ENCODE measurements at regions of chr19 and their contacts with region 1.

Region 1: DNA sequence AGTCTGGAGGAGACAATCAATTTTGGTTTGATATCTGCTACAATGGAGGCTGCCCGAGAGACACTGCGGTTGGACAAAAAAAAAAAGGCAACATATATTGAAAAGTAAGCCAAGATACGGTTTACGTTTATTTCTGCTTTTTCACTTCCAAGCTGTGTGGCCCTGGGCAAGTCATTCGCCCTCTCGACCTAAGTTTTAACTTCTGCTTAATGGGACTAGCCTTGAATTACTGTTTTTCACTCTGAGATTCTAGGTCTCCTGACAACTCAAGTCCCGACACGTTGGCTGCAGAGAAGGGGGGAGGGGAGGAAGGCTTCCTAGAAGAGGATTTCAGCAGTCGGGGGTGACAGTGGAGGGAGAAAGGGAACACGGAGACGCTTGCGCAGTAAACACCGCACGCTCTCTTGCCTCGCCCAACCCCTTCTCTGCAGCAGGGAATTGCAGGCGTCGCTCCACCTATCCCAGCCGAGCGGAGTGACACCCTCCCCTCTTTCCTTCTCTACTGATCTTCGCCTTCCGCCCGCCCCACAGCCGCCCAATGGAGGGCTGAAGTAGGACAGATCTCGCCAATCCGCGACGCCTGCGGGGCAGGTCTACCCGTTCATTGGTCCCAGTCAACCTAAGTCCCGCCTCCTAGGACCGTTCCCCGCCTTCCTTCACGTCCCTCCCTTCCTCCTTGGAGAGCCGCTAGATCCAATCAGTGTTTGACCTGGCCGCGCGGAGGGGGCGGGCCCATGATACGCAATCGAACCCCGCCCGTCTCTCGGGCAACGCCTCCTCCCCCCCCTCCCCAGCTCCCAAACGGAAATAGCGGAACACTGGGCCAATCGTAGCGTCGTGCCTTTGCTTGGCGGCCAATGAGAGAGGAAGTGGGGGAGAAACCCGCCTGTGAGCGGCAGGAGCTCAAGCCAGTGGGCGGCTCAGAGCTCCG is 529 bp upstream of the AP2A1 start:
- DNase-seq: peak; percentile 100
- H3K4me3 Mint-ChIP-seq: peak overlapping the region; percentile 94
- H3K27ac Mint-ChIP-seq: peak overlapping the region; percentile 92
- H3K4me1 Mint-ChIP-seq: peaks cover 30% of the 10 kb centered on the region
- H3K27me3 Mint-ChIP-seq: no peaks in the 10 kb centered on the region

Region 2: DNA sequence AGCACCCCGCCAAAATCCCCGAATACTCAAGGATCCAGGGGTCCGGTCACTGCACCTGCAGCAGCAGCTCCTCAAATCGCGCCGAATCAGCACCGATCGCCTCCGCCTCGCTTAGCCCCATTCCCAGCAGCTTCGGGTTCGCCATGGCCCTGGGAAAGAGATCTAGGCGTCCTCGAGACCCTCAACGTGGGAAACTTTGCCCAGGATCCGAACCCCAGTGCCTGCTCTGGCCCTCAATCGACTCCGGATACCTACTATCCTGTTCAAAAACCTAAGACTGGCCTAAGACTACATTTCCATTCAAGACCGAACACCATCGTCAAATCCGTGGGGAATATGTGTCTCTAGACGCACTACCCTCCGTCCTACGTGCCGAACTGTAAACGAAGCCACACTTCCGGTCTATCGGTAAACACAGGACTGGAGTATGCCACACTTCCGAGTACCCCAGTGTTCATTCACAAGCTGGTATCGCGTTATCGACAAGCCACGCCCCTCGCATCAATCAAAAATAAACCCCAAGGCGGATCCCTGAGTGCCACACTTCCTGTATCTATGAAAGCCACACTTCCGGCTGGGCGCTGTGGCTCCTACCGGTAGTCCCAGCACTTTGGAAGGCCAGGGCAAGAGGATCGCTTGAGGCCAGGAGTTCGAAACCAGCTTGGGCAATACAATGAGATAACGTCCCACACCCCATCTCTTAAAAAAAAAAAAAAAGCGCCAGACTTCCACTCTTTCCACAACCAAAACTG is 314.7 kb before region 1 on chr19 and contains the start of gene PIH1D1:
- CTCF ChIA-PET with region 1: no interaction called
- intact Hi-C with region 1: loop called (anchors 5 kb)
- DNase-seq: peak; percentile 99
- H3K4me3 Mint-ChIP-seq: peak within 1 kb of the TSS; percentile 100
- H3K27ac Mint-ChIP-seq: peak within 1 kb of the TSS; percentile 100
- H3K4me1 Mint-ChIP-seq: peaks cover 40% of the 10 kb centered on the region
- H3K27me3 Mint-ChIP-seq: no peaks in the 10 kb centered on the region
- total RNA-seq, gene PIH1D1: 80.7 to 84.4 TPM

Region 3: DNA sequence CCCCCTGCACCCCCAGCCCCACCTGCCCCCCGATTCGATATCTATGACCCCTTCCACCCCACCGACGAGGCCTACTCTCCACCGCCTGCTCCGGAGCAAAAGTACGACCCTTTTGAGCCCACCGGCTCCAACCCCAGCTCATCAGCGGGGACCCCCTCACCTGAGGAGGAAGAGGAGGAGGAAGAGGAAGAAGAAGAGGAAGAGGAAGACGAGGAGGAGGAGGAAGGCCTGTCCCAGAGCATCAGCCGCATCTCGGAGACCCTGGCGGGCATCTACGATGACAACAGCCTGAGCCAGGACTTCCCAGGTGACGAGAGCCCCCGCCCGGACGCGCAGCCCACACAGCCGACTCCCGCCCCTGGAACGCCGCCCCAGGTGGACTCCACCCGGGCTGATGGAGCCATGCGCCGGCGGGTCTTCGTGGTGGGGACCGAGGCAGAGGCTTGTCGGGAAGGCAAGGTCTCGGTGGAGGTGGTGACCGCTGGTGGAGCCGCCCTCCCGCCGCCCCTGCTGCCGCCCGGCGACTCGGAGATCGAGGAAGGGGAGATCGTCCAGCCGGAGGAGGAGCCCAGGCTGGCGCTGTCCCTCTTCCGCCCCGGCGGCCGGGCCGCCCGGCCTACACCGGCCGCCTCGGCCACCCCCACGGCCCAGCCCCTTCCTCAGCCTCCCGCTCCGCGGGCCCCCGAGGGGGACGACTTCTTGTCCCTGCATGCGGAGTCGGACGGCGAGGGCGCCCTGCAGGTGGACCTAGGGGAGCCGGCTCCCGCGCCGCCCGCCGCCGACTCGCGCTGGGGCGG is 115.0 kb before region 1 on chr19:
- CTCF ChIA-PET with region 1: no interaction called
- intact Hi-C with region 1: no loop called
- DNase-seq: no peak
- H3K4me3 Mint-ChIP-seq: no peak overlapping the region
- H3K27ac Mint-ChIP-seq: no peak overlapping the region
- H3K4me1 Mint-ChIP-seq: no peaks in the 10 kb centered on the region
- H3K27me3 Mint-ChIP-seq: no peaks in the 10 kb centered on the region

Region 4: GRCh38 chr19:49712397-49712859 is 53.8 kb before region 1 on chr19:
- CTCF ChIA-PET with region 1: no interaction called
- intact Hi-C with region 1: loop called (anchors 1 kb)
- DNase-seq: no peak
- H3K4me3 Mint-ChIP-seq: no peak overlapping the region
- H3K27ac Mint-ChIP-seq: no peak overlapping the region
- H3K4me1 Mint-ChIP-seq: peaks cover 6% of the 10 kb centered on the region
- H3K27me3 Mint-ChIP-seq: no peaks in the 10 kb centered on the region

Region 5: GRCh38 chr19:49817964-49818648 is 51.8 kb after region 1 on chr19 and contains the start of gene MED25:
- CTCF ChIA-PET with region 1: interaction called, 4 read pairs
- intact Hi-C with region 1: loop called (anchors 1 kb)
- DNase-seq: peak; percentile 87
- H3K4me3 Mint-ChIP-seq: peak within 1 kb of the TSS; percentile 92
- H3K27ac Mint-ChIP-seq: peak within 1 kb of the TSS; percentile 99
- H3K4me1 Mint-ChIP-seq: peaks cover 16% of the 10 kb centered on the region
- H3K27me3 Mint-ChIP-seq: no peaks in the 10 kb centered on the region
- total RNA-seq, gene MED25: 32.4 to 39.2 TPM

Region 6: GRCh38 chr19:49877020-49877878 is 111.0 kb after region 1 on chr19 and contains the starts of genes AKT1S1 and TBC1D17:
- CTCF ChIA-PET with region 1: no interaction called
- intact Hi-C with region 1: loop called (anchors 1 kb)
- DNase-seq: peak; percentile 99
- H3K4me3 Mint-ChIP-seq: no peak within 1 kb of the TSS
- H3K27ac Mint-ChIP-seq: no peak within 1 kb of the TSS
- H3K4me1 Mint-ChIP-seq: peaks cover 28% of the 10 kb centered on the region
- H3K27me3 Mint-ChIP-seq: no peaks in the 10 kb centered on the region
- total RNA-seq, gene AKT1S1: 13.3 to 14.2 TPM
- total RNA-seq, gene TBC1D17: 29.8 to 32.4 TPM

Region 7: DNA sequence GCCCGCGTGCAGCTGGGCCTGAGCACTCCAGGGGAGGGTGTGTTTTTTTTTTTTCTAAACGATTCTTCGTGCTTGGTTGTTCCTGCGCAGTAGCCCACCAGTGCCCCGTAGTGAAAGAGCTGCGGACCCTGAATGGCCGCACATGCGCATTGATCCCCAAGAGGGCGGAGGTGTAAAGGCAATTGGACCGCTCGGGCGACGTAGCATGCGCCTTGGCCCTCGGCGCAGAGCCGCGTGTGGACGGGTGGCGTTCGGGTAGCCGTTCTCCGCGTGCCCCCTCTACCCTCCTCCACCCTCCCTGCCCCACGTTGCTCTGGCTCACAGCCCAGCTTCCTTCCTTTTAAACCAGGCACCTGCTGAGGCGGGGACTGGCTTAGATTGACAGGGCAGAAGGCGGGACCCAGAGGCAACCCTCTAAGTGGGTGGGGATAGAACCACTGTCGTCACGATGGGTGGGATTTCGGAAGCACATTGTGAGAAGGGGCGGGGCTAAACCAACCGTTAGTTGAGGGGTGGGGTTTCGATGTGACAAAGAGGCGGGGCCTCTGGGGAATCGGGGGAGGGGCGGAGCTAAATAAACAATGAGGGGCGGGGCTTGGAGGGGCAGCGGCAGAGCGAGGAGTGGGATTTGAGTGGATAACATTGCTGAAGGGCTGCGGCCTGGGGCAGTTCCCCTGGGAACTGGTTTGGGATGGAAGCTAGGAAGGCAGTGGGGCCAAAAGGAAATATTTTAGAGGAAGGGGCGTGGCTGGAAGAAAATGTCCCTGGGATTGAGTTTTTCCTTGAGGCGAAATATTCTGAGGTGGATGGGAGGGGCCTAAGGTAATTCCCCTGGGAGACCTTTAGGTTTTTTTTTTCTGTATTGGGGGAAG is 163.6 kb after region 1 on chr19:
- CTCF ChIA-PET with region 1: no interaction called
- intact Hi-C with region 1: loop called (anchors 1 kb)
- DNase-seq: peak; percentile 97
- H3K4me3 Mint-ChIP-seq: peak overlapping the region; percentile 89
- H3K27ac Mint-ChIP-seq: peak overlapping the region; percentile 100
- H3K4me1 Mint-ChIP-seq: peaks cover 60% of the 10 kb centered on the region
- H3K27me3 Mint-ChIP-seq: no peaks in the 10 kb centered on the region

Region 8: DNA sequence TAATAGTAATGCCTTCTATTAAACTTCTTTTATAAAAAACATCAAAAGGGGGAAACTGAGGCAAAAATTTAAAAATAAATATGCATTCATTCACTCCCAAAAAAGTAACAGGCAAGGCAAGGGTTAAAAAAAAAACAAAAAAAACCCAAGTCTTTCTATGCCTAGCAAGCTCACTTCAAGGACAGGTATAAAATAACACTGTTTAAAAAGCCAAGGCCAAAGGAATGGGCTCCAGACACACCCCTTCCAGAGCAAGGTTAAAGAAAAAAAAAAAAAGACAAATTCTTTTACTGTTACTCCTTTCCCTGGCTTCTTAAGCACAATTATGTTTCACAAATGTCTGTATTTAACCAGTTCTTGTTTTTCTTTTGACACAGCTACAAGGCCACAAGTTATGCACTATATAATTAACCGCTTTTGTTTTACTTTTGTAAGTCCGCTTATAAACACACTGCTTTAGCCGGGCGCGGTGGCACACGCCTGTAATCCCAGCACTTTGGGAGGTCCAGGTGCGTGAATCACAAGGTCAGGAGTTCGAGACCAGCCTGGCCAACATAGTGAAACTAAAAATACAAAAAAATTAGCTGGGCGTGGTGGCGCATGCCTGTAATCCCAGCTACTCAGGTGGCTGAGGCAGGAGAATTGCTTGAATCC is 191.1 kb after region 1 on chr19:
- CTCF ChIA-PET with region 1: no interaction called
- intact Hi-C with region 1: no loop called
- DNase-seq: no peak
- H3K4me3 Mint-ChIP-seq: no peak overlapping the region
- H3K27ac Mint-ChIP-seq: no peak overlapping the region
- H3K4me1 Mint-ChIP-seq: peaks cover 5% of the 10 kb centered on the region
- H3K27me3 Mint-ChIP-seq: no peaks in the 10 kb centered on the region

Region 9: GRCh38 chr19:50025024-50025789 is 258.9 kb after region 1 on chr19 and contains the start of gene VRK3:
- CTCF ChIA-PET with region 1: no interaction called
- intact Hi-C with region 1: loop called (anchors 1 kb)
- DNase-seq: peak; percentile 99
- H3K4me3 Mint-ChIP-seq: peak within 1 kb of the TSS; percentile 95
- H3K27ac Mint-ChIP-seq: peak within 1 kb of the TSS; percentile 97
- H3K4me1 Mint-ChIP-seq: peaks cover 50% of the 10 kb centered on the region
- H3K27me3 Mint-ChIP-seq: no peaks in the 10 kb centered on the region
- total RNA-seq, gene VRK3: 45.7 to 54.3 TPM